ENCODE measurements at regions of chr7 and their contacts with region 1.

Region 1: DNA sequence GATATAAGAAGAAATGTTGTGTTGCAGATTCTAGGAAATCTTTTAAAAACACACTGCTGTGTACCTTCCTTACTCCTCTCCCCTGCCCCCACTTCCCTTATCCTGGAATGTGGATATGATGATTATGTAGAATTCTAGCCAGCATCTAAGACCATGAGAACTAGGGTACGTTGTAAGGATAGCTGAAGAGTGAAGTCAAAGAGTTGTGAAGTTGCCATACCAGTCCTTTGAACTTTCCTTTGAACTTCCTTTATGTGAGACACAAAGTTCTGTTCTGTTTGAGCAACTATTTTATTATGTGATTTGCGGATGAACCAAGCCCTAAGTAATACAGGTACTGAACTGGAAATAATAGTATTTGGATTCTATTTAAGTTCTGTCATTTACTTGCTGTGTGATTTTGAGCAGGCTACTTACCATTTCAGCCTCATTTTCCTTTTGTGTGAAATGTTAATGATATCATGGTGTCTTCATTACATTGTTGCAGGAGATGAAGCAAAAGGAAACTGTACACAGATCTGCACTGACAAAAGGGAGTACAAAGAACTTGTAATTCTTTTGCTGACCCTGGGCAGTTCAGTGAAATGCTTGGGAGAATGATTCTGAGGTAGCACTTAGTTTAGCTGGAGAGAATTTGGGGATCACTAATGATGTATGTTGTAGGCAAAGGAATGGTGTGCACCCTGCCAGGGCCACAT is 31.4 kb downstream of the RPA3 start:
- DNase-seq: no peak
- ATAC-seq: peak in 1 of 8 donors; percentile 2
- H3K4me3 ChIP-seq: peak overlapping the region in 1 of 10 donors; percentile 29
- H3K27ac ChIP-seq: peak overlapping the region in 9 of 10 donors; percentile 19 to 87 (median 75)
- H3K4me1 ChIP-seq: peaks cover 5 to 47% (median 34%) of the 10 kb centered on the region in 9 donors
- H3K27me3 ChIP-seq: no peaks in the 10 kb centered on the region
- CTCF ChIP-seq: no peak

Region 2: GRCh38 chr7:7505915-7506314 is 181.0 kb before region 1 on chr7:
- intact Hi-C with region 1: no loop called
- DNase-seq: no peak
- ATAC-seq: peak in 1 of 8 donors; percentile 68
- H3K4me3 ChIP-seq: no peak overlapping the region
- H3K27ac ChIP-seq: peak overlapping the region in 1 of 10 donors; percentile 31
- H3K4me1 ChIP-seq: peaks cover 0 to 2% (median 0%) of the 10 kb centered on the region in 9 donors
- H3K27me3 ChIP-seq: no peaks in the 10 kb centered on the region
- CTCF ChIP-seq: no peak

Region 3: DNA sequence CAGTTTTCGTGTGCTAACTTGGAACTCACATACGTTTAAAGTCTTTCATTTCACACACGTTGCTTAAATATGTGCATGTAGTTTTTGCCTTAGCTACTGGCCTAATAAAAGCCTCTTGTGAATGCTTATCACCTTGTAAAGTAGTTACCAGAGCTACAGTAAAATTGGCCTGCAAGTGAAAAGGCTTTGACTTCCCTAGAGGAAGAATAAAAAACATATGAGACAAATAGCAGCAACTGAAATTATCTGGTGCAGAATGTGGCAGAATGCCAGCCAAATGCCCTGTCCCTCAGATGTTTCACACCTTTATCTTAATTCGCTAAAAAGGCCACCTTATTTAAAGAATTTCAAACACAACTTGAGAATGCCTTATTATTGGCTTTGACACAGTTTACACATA is 59.5 kb after region 1 on chr7:
- intact Hi-C with region 1: loop called in 1 of 10 experiments (anchors 5 kb)
- DNase-seq: no peak
- ATAC-seq: peak in 6 of 8 donors; percentile 16 to 84 (median 55)
- H3K4me3 ChIP-seq: no peak overlapping the region
- H3K27ac ChIP-seq: peak overlapping the region in 5 of 10 donors; percentile 23 to 57 (median 42)
- H3K4me1 ChIP-seq: peaks cover 0 to 37% (median 22%) of the 10 kb centered on the region in 9 donors
- H3K27me3 ChIP-seq: no peaks in the 10 kb centered on the region
- CTCF ChIP-seq: no peak

Region 4: GRCh38 chr7:7761340-7761980 is 74.5 kb after region 1 on chr7:
- intact Hi-C with region 1: loop called in 4 of 10 experiments (anchors 2 to 5 kb)
- DNase-seq: no peak
- ATAC-seq: peak in 7 of 8 donors; percentile 37 to 74 (median 68)
- H3K4me3 ChIP-seq: peak overlapping the region in 9 of 10 donors; percentile 23 to 61 (median 51)
- H3K27ac ChIP-seq: peak overlapping the region; percentile 21 to 86 (median 72)
- H3K4me1 ChIP-seq: peaks cover 0 to 28% (median 11%) of the 10 kb centered on the region in 9 donors
- H3K27me3 ChIP-seq: no peaks in the 10 kb centered on the region
- CTCF ChIP-seq: peak; percentile 21 to 74 (median 57)

Region 5: GRCh38 chr7:7920481-7920880 is 233.5 kb after region 1 on chr7:
- intact Hi-C with region 1: no loop called
- DNase-seq: no peak
- ATAC-seq: no peak
- H3K4me3 ChIP-seq: no peak overlapping the region
- H3K27ac ChIP-seq: no peak overlapping the region
- H3K4me1 ChIP-seq: no peaks in the 10 kb centered on the region
- H3K27me3 ChIP-seq: no peaks in the 10 kb centered on the region
- CTCF ChIP-seq: no peak